Ovary (tissue), 10 donors: ENCODE measurements at regions of chr7 and their contacts with region 1.

Region 1: GRCh38 chr7:77269360-77270093 is 69.9 kb upstream of the FGL2 start:
- DNase-seq: peak in 2 of 5 donors; percentile 20 to 46
- H3K4me3 ChIP-seq: no peak overlapping the region
- H3K27ac ChIP-seq: peak overlapping the region in 1 of 2 donors; percentile 8
- H3K4me1 ChIP-seq: peaks cover 2% of the 10 kb centered on the region
- H3K27me3 ChIP-seq: no peaks in the 10 kb centered on the region
- CTCF ChIP-seq: no peak
- EP300 ChIP-seq: no peak
- POLR2A ChIP-seq: no peak

Region 2: DNA sequence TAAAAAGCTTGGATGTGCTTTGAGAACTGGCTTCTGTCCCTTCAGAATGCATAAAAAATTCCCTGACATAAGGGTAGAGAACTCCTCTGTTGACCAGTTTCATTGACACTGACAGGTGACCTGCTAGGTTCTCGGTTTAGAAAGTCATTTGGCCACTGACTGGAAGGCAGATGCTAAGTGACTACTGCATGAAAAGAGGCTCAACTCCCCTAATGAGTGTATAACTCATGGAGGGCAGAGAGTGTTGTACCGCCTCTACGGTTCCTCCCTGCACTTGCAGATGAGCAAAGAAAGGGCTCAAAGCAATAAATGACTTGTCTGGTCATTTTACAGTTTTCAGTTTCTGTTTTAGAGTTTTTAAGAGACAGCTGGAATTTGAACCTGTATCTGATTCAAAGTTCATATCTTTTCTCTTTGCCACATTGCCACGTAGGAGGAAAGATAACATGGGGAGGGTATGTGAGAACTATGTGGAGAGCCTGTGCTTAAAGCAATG is 67.0 kb before region 1 on chr7:
- intact Hi-C with region 1: no loop called
- DNase-seq: no peak
- H3K4me3 ChIP-seq: no peak overlapping the region
- H3K27ac ChIP-seq: no peak overlapping the region
- H3K4me1 ChIP-seq: peaks cover 2% of the 10 kb centered on the region
- H3K27me3 ChIP-seq: no peaks in the 10 kb centered on the region
- CTCF ChIP-seq: no peak
- EP300 ChIP-seq: no peak
- POLR2A ChIP-seq: no peak

Region 3: GRCh38 chr7:77326696-77327628 is 57.4 kb after region 1 on chr7:
- intact Hi-C with region 1: loop called in 1 of 4 experiments (anchors 10 kb)
- DNase-seq: peak in 1 of 5 donors; percentile 41
- H3K4me3 ChIP-seq: no peak overlapping the region
- H3K27ac ChIP-seq: no peak overlapping the region
- H3K4me1 ChIP-seq: peaks cover 11% of the 10 kb centered on the region
- H3K27me3 ChIP-seq: no peaks in the 10 kb centered on the region
- CTCF ChIP-seq: no peak
- EP300 ChIP-seq: no peak
- POLR2A ChIP-seq: no peak